ENCODE measurements at regions of chr18 and their contacts with region 1.

Region 1: DNA sequence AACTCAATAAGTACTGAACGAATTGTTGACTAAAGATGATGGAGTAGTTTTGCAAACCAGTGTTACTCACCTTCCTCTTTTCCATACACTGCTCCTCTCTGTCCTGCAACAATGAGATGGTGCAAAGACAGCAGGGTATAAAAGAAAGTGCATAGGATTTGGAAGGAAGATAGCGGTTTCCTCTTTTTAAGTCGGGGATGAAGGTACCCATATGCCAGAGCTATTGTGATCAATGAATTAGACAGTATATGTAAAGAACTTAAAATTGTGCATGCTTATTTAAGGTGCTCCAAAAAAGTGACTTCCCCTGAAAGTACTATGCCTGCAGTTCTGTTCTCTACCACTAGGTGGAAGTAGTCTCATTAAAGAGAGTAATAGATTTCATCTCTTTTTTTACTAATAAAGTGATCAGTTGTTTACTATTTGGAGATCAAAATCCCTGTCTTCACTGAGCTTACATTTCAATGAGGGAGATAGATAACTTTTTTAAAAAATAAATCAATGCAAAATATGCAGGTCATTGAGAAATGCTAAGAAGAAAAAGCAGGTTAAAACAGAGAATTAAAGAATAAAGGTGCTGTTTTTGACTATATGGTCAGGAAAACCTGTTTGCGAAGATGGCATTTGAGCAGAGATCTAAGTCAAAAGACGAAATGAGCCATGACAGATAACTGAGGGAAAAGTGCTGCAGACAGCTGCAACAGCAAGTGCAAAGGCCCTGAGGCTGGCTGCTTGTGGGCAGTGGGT is 339.7 kb upstream of the SLC14A2 start:
- DNase-seq: no peak
- ATAC-seq: no peak

Region 2: GRCh38 chr18:45221363-45221762 is 54.2 kb before region 1 on chr18:
- intact Hi-C with region 1: no loop called
- DNase-seq: no peak
- ATAC-seq: no peak

Region 3: GRCh38 chr18:45384137-45384961 is 108.8 kb after region 1 on chr18:
- intact Hi-C with region 1: loop called (anchors 5 kb)
- DNase-seq: no peak
- ATAC-seq: peak; percentile 79

Region 4: DNA sequence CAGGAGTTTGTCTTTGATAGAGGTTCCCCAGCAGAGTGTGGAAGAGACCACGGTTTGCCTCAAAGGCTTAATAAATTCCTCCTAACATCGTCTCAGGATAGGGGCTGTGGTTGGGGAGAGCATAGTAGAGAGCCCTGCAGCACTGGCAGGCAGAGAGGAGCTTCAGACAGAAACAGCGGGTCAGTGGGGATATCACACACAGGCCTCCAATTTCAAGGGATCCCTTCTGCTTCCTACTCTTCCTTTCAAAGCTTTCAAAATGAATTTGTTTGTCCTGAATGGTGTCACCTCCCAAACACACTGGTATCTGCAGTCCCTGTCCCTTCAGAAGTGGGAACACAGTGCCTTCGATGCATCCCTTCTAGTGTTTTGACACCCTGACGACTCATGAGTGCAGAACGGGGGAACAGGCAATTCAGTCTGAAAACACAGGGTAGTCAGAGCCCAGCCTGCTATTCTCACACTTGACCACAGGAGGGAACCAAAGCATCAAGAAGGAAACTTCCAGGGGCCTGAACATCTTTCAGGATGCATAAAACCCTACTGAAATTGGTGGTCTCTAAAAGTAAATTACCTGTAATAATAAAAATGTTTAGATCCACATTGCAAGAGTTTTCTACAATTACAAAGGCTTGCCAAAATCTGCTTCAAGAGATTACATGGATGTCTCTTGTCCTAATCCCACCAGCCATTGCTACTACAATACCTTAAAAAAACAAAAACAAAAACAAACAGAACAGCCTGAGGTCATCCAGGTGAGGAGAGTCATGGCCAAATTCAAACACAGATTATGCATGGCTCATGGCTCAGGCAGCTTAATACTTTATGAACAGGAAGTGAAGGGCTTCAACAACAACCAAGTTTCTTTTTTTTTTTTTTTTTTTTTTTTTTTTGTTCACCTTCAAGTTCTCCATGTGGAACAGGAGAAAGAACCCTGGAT is 389.6 kb after region 1 on chr18:
- intact Hi-C with region 1: no loop called
- DNase-seq: no peak
- ATAC-seq: peak; percentile 55